CD4-positive, alpha-beta T cell (primary cell): ENCODE measurements at regions of chr1 and their contacts with region 1.

Region 1: DNA sequence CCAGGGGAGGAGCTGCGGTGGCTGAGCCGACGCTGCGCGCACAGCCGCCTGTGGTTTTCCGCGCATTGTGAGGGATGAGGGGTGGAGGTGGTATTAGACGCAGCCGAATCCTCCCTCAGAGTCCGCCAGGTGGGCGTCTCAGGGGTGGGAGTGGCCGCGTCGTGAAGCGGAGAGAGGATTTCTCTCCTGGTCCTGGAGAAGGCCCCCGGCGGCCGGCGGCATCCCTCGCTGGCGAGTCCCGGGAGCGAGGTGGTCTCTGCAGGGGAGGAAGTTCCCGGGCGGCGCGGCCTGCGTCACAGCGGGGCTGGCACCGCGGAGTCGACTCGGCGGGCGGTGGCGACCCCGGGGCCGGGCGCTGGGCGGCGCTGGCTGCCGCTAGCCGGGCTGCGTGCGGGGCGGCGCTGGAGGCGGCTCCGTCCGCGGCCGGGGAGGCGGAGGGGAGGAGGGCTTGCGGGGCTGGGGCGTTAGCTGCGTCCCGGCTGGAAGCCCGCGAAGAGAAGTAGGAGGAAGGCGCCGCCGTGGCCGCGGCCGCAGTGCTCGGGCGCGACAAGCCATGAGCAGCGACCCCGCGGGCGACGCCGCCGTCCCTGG is at the start of gene LRRC8C:
- DNase-seq: peak; percentile 75 to 95 (median 86)
- ATAC-seq: peak; percentile 77
- H3K4me3 ChIP-seq: peak within 1 kb of the TSS; percentile 95
- H3K4me3 Mint-ChIP-seq: peak within 1 kb of the TSS; percentile 99
- H3K27ac ChIP-seq: peak within 1 kb of the TSS; percentile 92 to 94
- H3K27ac Mint-ChIP-seq: peak within 1 kb of the TSS; percentile 98
- H3K4me1 ChIP-seq: peaks cover 41% of the 10 kb centered on the region
- H3K4me1 Mint-ChIP-seq: peaks cover 89% of the 10 kb centered on the region
- H3K27me3 ChIP-seq: no peaks in the 10 kb centered on the region
- H3K27me3 Mint-ChIP-seq: no peaks in the 10 kb centered on the region
- CTCF ChIP-seq: no peak
- total RNA-seq, gene LRRC8C: 28.4 to 30.2 TPM

Region 2: DNA sequence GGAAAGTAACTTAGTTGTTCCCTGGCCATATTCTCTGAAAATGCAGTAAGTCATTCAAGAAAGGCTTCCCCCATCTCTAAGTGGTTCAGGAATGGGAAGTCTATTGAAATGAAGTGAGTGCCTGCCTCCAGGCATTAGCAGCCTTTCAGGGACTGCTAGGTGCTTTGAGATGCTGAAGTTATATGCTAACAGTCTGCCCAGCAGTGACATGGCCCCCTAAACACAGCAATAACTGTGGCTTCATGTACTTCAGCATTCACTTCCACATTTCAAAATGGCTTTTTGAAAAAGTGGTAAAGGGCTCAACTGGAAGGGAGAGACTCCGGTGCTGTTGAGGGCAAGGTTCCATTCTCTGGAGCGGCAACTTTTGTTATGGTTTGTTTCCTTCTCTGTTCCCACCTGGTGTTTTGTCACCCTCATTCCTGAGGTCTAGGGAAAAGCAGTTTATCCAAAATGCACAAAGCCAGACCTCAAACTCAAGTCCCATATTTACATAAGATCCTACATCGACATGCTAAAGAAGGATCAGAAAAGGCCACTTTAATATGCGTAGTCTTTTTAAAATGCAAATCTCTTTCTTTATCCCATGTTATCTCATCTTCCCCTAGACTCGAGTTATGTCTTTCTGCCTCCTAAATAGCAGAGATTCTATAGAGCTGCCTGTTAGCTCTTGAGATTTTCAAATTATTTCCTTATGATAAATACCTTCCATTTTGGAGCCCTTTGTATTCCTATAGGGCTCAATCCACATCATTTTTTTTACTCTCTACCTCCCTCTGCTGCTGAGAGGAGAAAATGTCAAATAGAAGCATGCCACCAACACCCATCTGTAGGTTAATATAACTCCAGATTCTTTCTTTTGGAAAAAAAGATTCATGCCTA is 34.1 kb before region 1 on chr1:
- CTCF ChIA-PET with region 1: interaction called, 6 read pairs
- POLR2A ChIA-PET with region 1: interaction called, 683 read pairs
- intact Hi-C with region 1: loop called (anchors 2 to 5 kb)
- DNase-seq: peak in 3 of 14 experiments; percentile 51 to 68 (median 67)
- ATAC-seq: peak; percentile 70
- H3K4me3 ChIP-seq: no peak overlapping the region
- H3K4me3 Mint-ChIP-seq: peak overlapping the region; percentile 7
- H3K27ac ChIP-seq: no peak overlapping the region
- H3K27ac Mint-ChIP-seq: peak overlapping the region; percentile 21
- H3K4me1 ChIP-seq: peaks cover 27% of the 10 kb centered on the region
- H3K4me1 Mint-ChIP-seq: peaks cover 90% of the 10 kb centered on the region
- H3K27me3 ChIP-seq: no peaks in the 10 kb centered on the region
- H3K27me3 Mint-ChIP-seq: no peaks in the 10 kb centered on the region
- CTCF ChIP-seq: peak; percentile 75

Region 3: DNA sequence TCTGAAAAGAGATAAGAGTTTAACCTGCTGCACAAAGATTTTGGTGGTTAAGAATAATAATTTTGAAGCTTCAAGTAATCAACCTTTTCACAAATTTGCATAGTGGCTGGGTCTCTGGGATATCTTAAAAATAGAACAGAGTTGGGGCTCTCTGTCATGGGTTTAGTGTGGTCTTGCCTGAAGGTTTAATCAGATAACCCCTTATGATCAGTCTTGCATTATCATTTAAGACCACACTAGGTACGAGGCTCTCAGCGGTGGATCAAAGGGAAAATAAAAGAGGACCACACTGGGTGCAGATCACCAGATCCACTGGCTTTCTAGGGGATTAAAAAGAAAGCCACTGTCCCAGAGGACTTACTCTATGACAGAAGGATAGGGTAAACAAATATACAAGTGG is 19.6 kb after region 1 on chr1:
- CTCF ChIA-PET with region 1: interaction called, 6 read pairs
- POLR2A ChIA-PET with region 1: interaction called, 139 read pairs
- intact Hi-C with region 1: loop called (anchors 2 kb)
- DNase-seq: no peak
- ATAC-seq: no peak
- H3K4me3 ChIP-seq: no peak overlapping the region
- H3K4me3 Mint-ChIP-seq: peak overlapping the region; percentile 14
- H3K27ac ChIP-seq: peak overlapping the region in 1 of 2 donors; percentile 7
- H3K27ac Mint-ChIP-seq: peak overlapping the region; percentile 88
- H3K4me1 ChIP-seq: peaks cover 25% of the 10 kb centered on the region
- H3K4me1 Mint-ChIP-seq: peaks cover 90% of the 10 kb centered on the region
- H3K27me3 ChIP-seq: no peaks in the 10 kb centered on the region
- H3K27me3 Mint-ChIP-seq: no peaks in the 10 kb centered on the region
- CTCF ChIP-seq: no peak

Region 4: DNA sequence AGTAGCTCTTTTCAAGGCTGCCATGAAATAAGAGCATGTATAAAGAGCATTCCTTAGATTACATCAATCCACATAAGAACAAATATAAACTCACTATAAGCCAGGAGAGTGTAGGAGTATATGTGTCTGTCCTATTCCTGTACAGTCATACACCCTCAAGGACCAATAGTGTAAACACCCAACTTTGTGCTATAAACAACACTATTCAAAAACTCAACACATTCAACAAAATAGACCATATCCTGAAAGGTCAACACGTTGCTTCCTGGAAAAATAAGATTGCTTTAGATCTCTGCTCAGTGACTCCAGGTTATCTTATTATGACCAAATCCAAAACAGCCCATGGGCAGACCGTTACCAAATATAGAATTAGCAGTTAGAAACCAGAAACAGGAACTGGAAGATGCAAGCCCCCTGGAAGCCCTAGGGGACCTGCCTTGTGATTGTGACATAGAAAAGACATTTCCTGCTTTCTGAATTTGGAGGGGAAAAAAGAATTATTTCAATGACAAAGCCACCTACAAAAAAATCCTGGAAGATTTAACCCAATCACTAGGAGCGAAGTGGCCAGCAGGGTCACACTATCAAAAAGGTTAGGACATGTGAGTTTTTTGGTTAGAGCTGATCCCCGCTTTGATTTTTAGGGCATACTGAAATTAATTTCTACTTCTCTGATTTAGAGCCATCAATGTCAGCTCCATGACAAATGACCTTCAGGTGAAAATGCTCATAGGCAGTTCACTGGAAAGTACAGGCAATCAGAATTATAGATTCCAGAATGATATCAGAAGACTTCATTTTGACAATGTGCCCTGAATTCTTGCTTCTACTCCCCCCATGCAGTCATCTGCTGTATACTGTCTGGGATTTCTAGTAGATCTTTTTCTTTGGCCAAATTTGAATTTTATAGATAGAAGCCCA is 60.1 kb after region 1 on chr1:
- CTCF ChIA-PET with region 1: interaction called, 8 read pairs
- POLR2A ChIA-PET with region 1: interaction called, 5 read pairs
- intact Hi-C with region 1: loop called in 1 of 2 experiments (anchors 10 kb)
- DNase-seq: peak in 1 of 14 experiments; percentile 17
- ATAC-seq: no peak
- H3K4me3 ChIP-seq: no peak overlapping the region
- H3K4me3 Mint-ChIP-seq: peak overlapping the region; percentile 22
- H3K27ac ChIP-seq: peak overlapping the region; percentile 7 to 31
- H3K27ac Mint-ChIP-seq: peak overlapping the region; percentile 79
- H3K4me1 ChIP-seq: peaks cover 30% of the 10 kb centered on the region
- H3K4me1 Mint-ChIP-seq: peaks cover 86% of the 10 kb centered on the region
- H3K27me3 ChIP-seq: no peaks in the 10 kb centered on the region
- H3K27me3 Mint-ChIP-seq: no peaks in the 10 kb centered on the region
- CTCF ChIP-seq: no peak

Region 5: DNA sequence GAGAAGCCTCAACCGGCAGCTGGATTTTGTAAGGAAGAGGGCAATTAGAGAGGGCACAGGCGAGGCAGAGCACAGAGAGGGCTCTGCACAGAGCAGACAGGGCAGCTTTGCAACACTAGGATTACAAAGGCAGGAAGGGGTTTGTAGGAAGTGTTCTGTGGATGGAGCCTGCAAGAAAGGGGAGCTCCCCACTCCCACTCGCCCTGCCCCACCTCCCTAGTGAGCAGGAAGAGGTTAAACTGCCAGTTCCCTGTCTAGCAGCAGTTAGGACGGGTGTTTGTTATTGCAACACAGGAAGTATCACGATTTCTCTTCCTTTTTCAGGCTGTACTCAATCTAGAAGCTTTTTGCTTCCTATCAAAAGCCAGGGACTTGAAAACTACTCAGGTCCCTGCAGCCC is 124.8 kb after region 1 on chr1:
- CTCF ChIA-PET with region 1: interaction called, 133 read pairs
- POLR2A ChIA-PET with region 1: interaction called, 83 read pairs
- intact Hi-C with region 1: loop called in 1 of 2 experiments (anchors 2 kb)
- DNase-seq: peak in 11 of 14 experiments; percentile 15 to 76 (median 38)
- ATAC-seq: peak; percentile 74
- H3K4me3 ChIP-seq: peak overlapping the region; percentile 41
- H3K4me3 Mint-ChIP-seq: peak overlapping the region; percentile 82
- H3K27ac ChIP-seq: peak overlapping the region; percentile 64 to 77
- H3K27ac Mint-ChIP-seq: peak overlapping the region; percentile 86
- H3K4me1 ChIP-seq: peaks cover 71% of the 10 kb centered on the region
- H3K4me1 Mint-ChIP-seq: peaks cover 89% of the 10 kb centered on the region
- H3K27me3 ChIP-seq: no peaks in the 10 kb centered on the region
- H3K27me3 Mint-ChIP-seq: no peaks in the 10 kb centered on the region
- CTCF ChIP-seq: no peak

Region 6: DNA sequence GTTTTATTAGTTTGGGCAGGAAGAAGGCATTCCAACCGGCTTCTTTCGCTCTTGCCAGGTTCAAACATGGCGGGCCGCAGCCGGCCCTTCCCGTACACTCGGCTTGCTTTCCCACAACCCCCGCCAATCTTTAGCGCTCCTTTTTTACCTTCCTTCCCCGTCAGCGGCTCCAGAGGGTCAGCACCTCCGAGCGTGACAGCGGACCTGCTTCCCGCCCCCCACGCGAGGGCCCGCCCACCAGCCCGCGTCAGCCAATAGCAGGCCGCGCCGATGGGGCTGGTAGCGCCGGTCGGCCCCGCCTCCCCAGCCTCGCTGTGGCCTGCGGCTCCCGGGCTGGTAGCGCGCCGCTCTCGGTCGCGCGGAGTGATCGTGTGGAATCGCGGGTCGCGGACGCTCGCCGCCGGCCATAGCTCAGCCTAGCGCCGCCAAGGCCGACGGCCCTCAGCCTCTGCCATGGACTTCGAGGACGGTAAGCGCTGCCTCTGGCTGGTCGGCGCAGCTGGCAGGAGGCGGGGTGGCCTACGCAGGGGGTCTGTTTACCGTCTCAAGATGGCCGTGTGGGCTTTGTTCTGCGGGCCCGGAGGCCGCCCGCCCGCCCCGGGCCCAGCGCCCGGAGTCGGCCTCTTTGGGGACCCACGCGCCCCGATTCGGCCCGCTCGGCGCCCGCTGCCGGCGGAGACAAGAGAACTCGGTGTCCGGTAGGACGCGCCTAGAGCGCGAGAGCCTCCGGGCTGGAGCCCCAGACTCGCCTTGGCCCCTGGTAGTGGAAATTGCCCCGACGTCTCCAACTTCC is 362.2 kb after region 1 on chr1 and contains the start of gene ZNF326:
- CTCF ChIA-PET with region 1: no interaction called
- POLR2A ChIA-PET with region 1: no interaction called
- intact Hi-C with region 1: loop called in 1 of 2 experiments (anchors 5 kb)
- DNase-seq: peak; percentile 83 to 96 (median 92)
- ATAC-seq: peak; percentile 96
- H3K4me3 ChIP-seq: peak within 1 kb of the TSS; percentile 89
- H3K4me3 Mint-ChIP-seq: peak within 1 kb of the TSS; percentile 98
- H3K27ac ChIP-seq: peak within 1 kb of the TSS; percentile 64 to 70
- H3K27ac Mint-ChIP-seq: peak within 1 kb of the TSS; percentile 95
- H3K4me1 ChIP-seq: peaks cover 17% of the 10 kb centered on the region
- H3K4me1 Mint-ChIP-seq: peaks cover 47% of the 10 kb centered on the region
- H3K27me3 ChIP-seq: no peaks in the 10 kb centered on the region
- H3K27me3 Mint-ChIP-seq: no peaks in the 10 kb centered on the region
- CTCF ChIP-seq: no peak
- total RNA-seq, gene ZNF326: 56.2 to 58.7 TPM